ENCODE measurements at regions of chr7 and their contacts with region 1.

Region 1: GRCh38 chr7:44490351-44491200 is at the start of gene NUDCD3:
- DNase-seq: peak; percentile 71 to 91 (median 78)
- ATAC-seq: peak; percentile 71
- H3K4me3 ChIP-seq: peak within 1 kb of the TSS; percentile 84
- H3K4me3 Mint-ChIP-seq: peak within 1 kb of the TSS; percentile 84
- H3K27ac ChIP-seq: peak within 1 kb of the TSS; percentile 95 to 97
- H3K27ac Mint-ChIP-seq: peak within 1 kb of the TSS; percentile 91
- H3K4me1 ChIP-seq: peaks cover 32% of the 10 kb centered on the region
- H3K4me1 Mint-ChIP-seq: peaks cover 48% of the 10 kb centered on the region
- H3K27me3 ChIP-seq: no peaks in the 10 kb centered on the region
- H3K27me3 Mint-ChIP-seq: peaks cover 3% of the 10 kb centered on the region
- CTCF ChIP-seq: peak; percentile 28
- total RNA-seq, gene NUDCD3: 56.6 to 60.6 TPM

Region 2: DNA sequence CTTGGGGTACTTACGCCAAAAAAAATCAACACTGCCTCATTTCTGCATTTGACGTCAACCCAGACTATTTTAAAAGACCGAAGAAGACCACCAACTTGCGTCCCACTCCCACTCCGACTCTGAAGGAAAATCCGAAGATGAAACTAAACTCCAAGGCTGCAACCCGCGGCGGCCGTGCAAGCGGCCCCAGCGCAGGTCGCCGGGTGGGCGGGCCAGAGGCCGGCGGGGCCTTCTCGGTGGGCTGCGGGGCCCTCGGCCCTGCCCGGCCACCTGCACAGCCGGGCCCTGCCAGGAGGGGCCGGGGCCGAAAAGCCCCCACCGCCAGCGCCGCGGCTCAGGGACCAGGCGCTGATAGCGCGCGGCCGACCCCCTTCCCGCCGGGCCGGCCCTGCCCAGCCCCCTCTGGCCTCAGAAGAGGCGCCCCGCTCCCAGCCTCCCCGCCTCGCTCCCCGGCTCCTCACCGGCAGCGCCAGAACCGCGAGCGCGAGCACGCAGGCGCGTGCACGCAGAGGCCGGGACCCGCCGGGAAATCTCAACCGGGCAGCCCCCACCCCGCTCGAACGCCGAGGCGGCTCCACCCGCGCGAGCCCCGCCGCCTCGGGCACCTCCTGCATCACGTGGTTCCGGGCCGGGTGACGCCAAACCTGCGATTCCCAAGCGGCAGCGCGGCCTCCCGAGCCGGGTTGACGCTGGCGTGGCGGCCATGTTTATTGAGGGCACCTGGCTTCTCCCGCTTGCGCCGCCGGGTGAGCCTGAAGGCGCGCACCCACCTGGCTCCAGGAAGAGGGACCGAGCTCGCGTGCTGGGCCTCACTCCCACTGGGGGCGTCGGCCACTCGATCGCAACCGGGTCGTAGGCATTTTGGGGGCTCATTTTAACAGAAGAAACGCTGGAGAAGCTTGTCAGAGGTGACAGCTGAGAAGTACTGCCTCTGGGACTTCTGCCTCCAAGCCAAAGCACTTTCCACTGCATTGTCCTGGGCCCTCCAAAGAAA is 1578.8 kb before region 1 on chr7 and contains the start of gene C7orf25:
- CTCF ChIA-PET with region 1: no interaction called
- POLR2A ChIA-PET with region 1: no interaction called
- intact Hi-C with region 1: loop called in 1 of 2 experiments (anchors 5 kb)
- DNase-seq: peak; percentile 89 to 98 (median 95)
- ATAC-seq: peak; percentile 95
- H3K4me3 ChIP-seq: peak within 1 kb of the TSS; percentile 69
- H3K4me3 Mint-ChIP-seq: peak within 1 kb of the TSS; percentile 93
- H3K27ac ChIP-seq: peak within 1 kb of the TSS in 1 of 2 donors; percentile 61
- H3K27ac Mint-ChIP-seq: peak within 1 kb of the TSS; percentile 86
- H3K4me1 ChIP-seq: peaks cover 21% of the 10 kb centered on the region
- H3K4me1 Mint-ChIP-seq: peaks cover 47% of the 10 kb centered on the region
- H3K27me3 ChIP-seq: no peaks in the 10 kb centered on the region
- H3K27me3 Mint-ChIP-seq: no peaks in the 10 kb centered on the region
- CTCF ChIP-seq: no peak
- total RNA-seq, gene C7orf25: 2.1 to 3.7 TPM

Region 3: DNA sequence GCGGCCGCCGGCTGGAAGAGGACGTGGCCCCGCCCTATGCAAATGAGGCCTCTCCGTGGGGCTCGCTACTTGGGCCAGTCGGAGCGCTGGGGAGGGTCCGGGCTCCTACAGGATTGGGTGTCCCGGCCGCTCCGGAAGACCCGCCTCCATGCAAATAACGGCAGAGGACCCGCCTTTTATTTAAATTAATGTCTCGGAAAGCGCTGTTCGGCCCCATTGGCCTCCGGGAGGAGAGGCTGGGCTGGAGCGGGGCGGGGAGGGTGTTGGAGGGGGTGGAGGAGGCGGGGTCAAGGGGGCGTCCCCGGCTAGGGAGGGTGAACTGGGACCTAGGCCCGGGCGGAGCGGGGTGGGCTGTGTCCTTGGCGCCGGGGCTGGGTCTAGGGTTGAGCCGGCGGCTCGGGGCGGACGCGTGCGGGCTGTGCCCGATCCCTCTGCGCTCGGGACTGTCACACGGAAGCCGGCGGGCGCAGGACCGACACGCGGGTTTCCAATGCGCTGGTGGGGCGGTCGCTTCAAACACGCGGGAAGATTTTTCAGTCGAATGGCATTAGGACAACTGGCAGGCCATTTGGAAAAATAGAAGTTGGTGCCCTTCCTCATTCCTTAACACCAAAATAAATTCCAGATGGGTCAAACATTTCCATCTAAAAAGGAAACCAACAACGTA is 407.9 kb before region 1 on chr7:
- CTCF ChIA-PET with region 1: no interaction called
- POLR2A ChIA-PET with region 1: interaction called, 11 read pairs
- intact Hi-C with region 1: no loop called
- DNase-seq: peak; percentile 94 to 99 (median 98)
- ATAC-seq: peak; percentile 93
- H3K4me3 ChIP-seq: peak overlapping the region; percentile 66
- H3K4me3 Mint-ChIP-seq: peak overlapping the region; percentile 95
- H3K27ac ChIP-seq: peak overlapping the region; percentile 37 to 68
- H3K27ac Mint-ChIP-seq: peak overlapping the region; percentile 80
- H3K4me1 ChIP-seq: peaks cover 28% of the 10 kb centered on the region
- H3K4me1 Mint-ChIP-seq: peaks cover 30% of the 10 kb centered on the region
- H3K27me3 ChIP-seq: no peaks in the 10 kb centered on the region
- H3K27me3 Mint-ChIP-seq: no peaks in the 10 kb centered on the region
- CTCF ChIP-seq: no peak

Region 4: DNA sequence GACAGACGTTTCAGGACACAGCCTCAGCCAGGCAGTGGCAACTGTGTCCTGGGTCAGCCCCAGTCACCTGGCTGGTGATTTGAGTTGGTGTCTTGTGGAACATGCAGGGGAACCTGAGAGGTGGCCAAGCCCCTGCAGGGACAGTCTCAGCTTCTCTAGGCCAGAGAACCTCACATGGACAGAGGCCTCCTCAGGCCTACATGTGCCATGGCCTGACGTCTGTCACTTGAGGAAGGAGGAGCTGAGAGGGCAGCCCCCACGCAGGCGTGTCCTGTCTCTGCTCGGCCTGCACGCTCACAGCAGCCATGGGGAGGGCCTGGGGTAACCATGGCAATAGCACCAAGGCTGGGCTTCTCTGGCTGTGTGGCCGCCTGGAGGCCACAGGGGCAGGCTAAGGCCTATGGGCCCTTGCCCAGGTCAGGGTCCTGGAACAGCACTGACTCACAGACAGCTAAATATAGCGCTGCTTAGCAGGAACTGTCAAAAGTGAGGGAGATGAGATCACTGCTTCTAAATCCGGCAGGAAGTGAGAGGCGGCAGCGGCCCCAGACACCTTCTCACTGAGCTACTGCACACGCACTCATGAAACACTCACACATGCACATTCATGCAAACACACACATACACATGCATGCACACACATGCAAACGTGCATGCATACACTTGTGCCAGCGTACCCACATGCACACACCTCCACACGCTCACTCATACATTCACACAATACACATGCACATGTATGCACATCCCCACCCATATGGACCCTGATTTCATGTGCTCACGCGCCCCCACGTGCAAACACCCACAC is 232.8 kb before region 1 on chr7:
- CTCF ChIA-PET with region 1: no interaction called
- POLR2A ChIA-PET with region 1: interaction called, 18 read pairs
- intact Hi-C with region 1: no loop called
- DNase-seq: peak; percentile 30 to 83 (median 56)
- ATAC-seq: peak; percentile 94
- H3K4me3 ChIP-seq: peak overlapping the region; percentile 13
- H3K4me3 Mint-ChIP-seq: peak overlapping the region; percentile 65
- H3K27ac ChIP-seq: peak overlapping the region; percentile 81 to 85
- H3K27ac Mint-ChIP-seq: peak overlapping the region; percentile 83
- H3K4me1 ChIP-seq: peaks cover 29% of the 10 kb centered on the region
- H3K4me1 Mint-ChIP-seq: peaks cover 27% of the 10 kb centered on the region
- H3K27me3 ChIP-seq: no peaks in the 10 kb centered on the region
- H3K27me3 Mint-ChIP-seq: no peaks in the 10 kb centered on the region
- CTCF ChIP-seq: no peak

Region 5: DNA sequence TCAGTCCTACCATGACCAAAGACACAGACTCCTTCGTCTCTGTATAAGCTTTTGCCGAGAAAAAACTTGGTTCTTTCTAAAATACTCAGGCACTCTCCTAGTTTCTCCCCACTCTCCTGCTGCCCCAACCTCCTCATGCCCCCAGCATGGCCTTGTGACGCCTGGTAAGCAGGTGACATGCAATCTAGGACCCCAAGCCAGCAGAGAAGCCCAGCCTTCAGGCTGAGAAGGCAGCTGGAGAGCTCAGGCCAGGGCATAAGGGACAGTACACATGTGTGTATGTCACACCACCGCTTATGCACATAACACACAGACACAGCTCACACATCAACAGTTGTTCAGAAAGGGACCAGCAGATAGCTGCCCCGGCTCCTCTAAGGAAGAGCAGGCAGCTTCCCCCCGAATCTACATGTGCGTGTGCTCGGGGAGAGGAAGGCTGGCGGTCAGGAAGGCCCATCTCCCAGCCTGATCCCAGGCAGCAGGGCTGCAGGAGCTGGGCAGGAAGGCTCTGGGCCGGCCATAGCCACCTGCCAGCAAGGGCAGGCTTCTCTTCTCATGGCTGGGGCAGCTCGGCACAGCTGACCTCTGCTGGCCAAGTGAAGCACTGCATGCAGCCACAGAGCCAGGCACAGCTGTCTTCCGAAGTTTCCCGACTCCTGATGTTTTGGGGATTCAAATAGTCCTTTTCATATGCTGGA is 74.7 kb after region 1 on chr7:
- CTCF ChIA-PET with region 1: interaction called, 8 read pairs
- POLR2A ChIA-PET with region 1: interaction called, 12 read pairs
- intact Hi-C with region 1: loop called (anchors 5 kb)
- DNase-seq: peak; percentile 40 to 78 (median 61)
- ATAC-seq: peak; percentile 94
- H3K4me3 ChIP-seq: no peak overlapping the region
- H3K4me3 Mint-ChIP-seq: no peak overlapping the region
- H3K27ac ChIP-seq: no peak overlapping the region
- H3K27ac Mint-ChIP-seq: peak overlapping the region; percentile 29
- H3K4me1 ChIP-seq: peaks cover 9% of the 10 kb centered on the region
- H3K4me1 Mint-ChIP-seq: peaks cover 27% of the 10 kb centered on the region
- H3K27me3 ChIP-seq: no peaks in the 10 kb centered on the region
- H3K27me3 Mint-ChIP-seq: no peaks in the 10 kb centered on the region
- CTCF ChIP-seq: peak; percentile 93

Region 6: DNA sequence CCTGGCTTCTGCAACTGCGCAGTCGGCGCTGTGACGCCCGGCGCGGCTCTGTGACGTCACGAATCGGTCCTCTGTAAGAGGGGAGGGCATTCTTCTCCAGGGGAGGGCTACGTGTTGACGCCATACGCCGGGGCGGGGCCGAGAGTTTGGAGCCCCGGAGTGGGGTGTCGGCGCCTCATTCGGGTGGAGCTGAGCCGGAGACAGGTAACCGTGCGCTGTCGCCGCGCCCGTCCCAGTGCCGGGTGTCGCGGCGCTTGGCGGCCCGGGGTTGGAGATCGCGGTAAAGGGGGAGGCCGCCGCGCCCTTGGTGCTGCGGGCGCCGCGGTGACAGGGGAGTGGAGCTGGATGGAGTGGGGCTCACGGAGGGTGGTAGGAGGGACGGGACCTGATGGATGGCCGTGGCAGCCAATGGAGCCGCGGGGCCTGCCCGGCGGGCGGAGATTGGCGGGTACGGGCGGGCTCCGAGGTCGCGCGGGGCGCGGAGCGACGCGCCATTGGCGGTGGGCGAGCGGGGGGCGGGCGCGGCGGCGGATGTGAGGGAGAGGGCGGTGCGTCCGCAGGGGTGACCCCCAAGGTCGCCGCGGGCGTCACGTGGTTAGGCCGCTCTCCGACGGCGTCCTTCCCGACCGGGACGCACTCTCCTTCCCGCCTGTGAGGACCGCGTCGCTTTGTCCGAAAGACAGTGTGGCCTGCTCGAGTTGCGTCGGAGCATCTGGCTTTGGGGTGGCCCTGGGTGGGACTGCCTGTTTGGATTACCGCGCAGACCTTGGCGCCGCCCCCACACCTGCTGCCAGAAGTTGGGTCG is 116.1 kb after region 1 on chr7 and contains the start of gene OGDH:
- CTCF ChIA-PET with region 1: no interaction called
- POLR2A ChIA-PET with region 1: interaction called, 22 read pairs
- intact Hi-C with region 1: no loop called
- DNase-seq: peak; percentile 97 to 100 (median 99)
- ATAC-seq: peak; percentile 91
- H3K4me3 ChIP-seq: peak within 1 kb of the TSS; percentile 69
- H3K4me3 Mint-ChIP-seq: peak within 1 kb of the TSS; percentile 100
- H3K27ac ChIP-seq: peak within 1 kb of the TSS; percentile 86 to 99
- H3K27ac Mint-ChIP-seq: peak within 1 kb of the TSS; percentile 100
- H3K4me1 ChIP-seq: peaks cover 43% of the 10 kb centered on the region
- H3K4me1 Mint-ChIP-seq: peaks cover 44% of the 10 kb centered on the region
- H3K27me3 ChIP-seq: no peaks in the 10 kb centered on the region
- H3K27me3 Mint-ChIP-seq: peaks cover 5% of the 10 kb centered on the region
- CTCF ChIP-seq: no peak
- total RNA-seq, gene OGDH: 39.8 to 43.8 TPM

Region 7: DNA sequence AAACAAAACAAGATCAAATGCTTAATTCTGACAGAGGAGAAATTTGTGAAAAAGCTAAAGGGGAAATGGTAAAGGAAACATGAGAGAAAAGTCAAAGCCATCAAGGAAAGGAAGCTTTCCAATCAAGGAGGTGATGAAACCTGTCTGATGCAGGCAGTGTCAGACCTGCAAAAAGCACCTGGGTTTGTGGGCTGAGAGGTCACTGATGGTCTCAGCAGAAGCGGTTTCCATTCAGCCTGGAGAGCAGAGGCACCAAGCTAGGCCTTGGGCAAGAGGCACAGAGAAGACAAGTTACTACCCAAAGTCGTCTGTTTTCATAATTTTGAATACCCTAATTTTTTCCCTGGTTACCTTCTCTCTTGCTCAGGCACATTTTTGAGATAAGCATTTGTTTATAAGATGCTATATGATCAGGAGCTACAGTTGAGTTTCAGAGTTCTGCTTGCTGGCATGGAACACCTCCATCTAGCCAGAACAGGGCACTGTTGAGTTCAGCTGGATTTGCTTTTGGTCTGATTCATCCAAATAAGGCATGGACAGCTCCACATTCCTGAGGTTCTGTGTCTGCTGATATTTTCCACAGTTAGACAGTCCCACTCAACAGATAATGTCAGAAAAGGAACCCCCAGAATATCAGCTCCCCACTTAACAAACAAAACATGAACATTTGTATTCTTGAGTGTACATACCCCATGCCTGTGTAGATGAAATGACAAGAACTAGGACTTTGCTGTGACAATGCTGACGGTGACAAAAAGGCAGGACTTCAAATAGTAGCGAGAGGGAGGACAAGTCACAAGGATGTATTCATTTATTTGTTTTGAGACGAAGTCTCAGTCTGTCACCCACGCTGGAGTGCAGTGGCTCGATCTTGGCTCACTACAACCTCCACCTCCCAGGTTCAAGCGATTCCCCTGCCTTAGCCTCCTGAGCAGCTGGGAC is 301.0 kb after region 1 on chr7:
- CTCF ChIA-PET with region 1: no interaction called
- POLR2A ChIA-PET with region 1: no interaction called
- intact Hi-C with region 1: no loop called
- DNase-seq: no peak
- ATAC-seq: no peak
- H3K4me3 ChIP-seq: no peak overlapping the region
- H3K4me3 Mint-ChIP-seq: peak overlapping the region; percentile 73
- H3K27ac ChIP-seq: no peak overlapping the region
- H3K27ac Mint-ChIP-seq: no peak overlapping the region
- H3K4me1 ChIP-seq: peaks cover 9% of the 10 kb centered on the region
- H3K4me1 Mint-ChIP-seq: peaks cover 5% of the 10 kb centered on the region
- H3K27me3 ChIP-seq: no peaks in the 10 kb centered on the region
- H3K27me3 Mint-ChIP-seq: no peaks in the 10 kb centered on the region
- CTCF ChIP-seq: no peak

Region 8: DNA sequence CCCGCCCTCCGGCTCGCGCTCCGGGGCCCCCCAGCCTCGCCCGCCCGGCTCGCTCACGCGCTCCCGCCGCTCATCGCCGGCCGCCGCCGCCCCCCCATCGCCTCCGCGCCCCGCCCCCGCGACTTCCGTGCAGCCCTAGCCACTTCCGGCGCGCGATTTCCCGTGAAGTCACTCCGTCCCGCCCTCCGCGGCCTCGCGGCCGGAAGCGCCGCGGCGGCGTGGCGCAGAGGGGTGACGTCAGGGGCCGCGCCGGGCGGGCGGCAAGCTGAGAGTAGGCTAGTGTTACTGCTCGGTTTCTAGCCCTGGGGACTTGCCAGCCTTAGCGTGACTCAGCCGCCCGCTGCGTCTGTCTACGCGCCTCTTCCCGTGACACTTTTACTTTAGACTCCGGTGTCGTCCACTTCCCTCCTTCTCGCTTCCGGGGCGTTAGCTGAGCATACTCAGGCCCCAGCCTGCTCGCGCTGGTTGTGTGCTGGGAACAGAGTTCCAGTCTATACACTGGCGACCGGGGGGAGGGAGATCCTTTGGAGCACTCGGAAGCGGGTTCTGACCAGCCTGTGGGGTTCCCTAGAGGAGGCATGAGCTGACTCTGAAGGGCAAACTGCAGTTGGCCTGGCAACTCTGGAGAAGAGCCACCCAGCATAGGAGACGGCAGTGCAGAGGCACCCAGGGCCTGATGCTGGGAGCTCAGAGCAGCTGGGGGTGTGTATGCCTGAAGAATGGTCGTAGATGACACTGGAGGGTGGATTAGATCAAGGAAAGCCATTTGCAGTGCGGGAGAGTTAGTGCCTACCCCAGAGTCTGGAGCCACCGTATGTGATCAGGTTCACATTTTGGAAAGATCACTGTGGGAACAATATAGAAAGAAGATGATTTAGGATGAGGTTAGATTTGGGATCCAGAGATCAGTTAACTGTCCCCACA is 395.1 kb after region 1 on chr7 and contains the start of gene PURB:
- CTCF ChIA-PET with region 1: no interaction called
- POLR2A ChIA-PET with region 1: interaction called, 19 read pairs
- intact Hi-C with region 1: loop called in 1 of 2 experiments (anchors 2 kb)
- DNase-seq: peak; percentile 93 to 100 (median 96)
- ATAC-seq: peak; percentile 88
- H3K4me3 ChIP-seq: peak within 1 kb of the TSS; percentile 68
- H3K4me3 Mint-ChIP-seq: peak within 1 kb of the TSS; percentile 87
- H3K27ac ChIP-seq: peak within 1 kb of the TSS; percentile 96 to 97
- H3K27ac Mint-ChIP-seq: peak within 1 kb of the TSS; percentile 100
- H3K4me1 ChIP-seq: peaks cover 32% of the 10 kb centered on the region
- H3K4me1 Mint-ChIP-seq: peaks cover 43% of the 10 kb centered on the region
- H3K27me3 ChIP-seq: no peaks in the 10 kb centered on the region
- H3K27me3 Mint-ChIP-seq: no peaks in the 10 kb centered on the region
- CTCF ChIP-seq: no peak
- total RNA-seq, gene PURB: 17.0 to 17.4 TPM

Measured in CD4-positive, alpha-beta T cell (primary cell).